PC-3 (cell line): ENCODE measurements at regions of chr5 and their contacts with region 1.

Region 1: GRCh38 chr5:141094481-141095262 is at the start of gene PCDHB2:
- DNase-seq: peak; percentile 81
- ATAC-seq: peak; percentile 97
- H3K4me3 ChIP-seq: peak within 1 kb of the TSS; percentile 72
- H3K27ac ChIP-seq: no peak within 1 kb of the TSS
- H3K4me1 ChIP-seq: no peaks in the 10 kb centered on the region
- H3K27me3 ChIP-seq: no peaks in the 10 kb centered on the region
- CTCF ChIP-seq: peak; percentile 73
- total RNA-seq, gene PCDHB2: 13.8 and 15.0 TPM in 2 replicates

Region 2: GRCh38 chr5:140725799-140726471 is 368.7 kb before region 1 on chr5:
- CTCF ChIA-PET with region 1: no interaction called
- POLR2A ChIA-PET with region 1: no interaction called
- intact Hi-C with region 1: no loop called
- DNase-seq: no peak
- ATAC-seq: no peak
- H3K4me3 ChIP-seq: no peak overlapping the region
- H3K27ac ChIP-seq: no peak overlapping the region
- H3K4me1 ChIP-seq: no peaks in the 10 kb centered on the region
- H3K27me3 ChIP-seq: no peaks in the 10 kb centered on the region
- CTCF ChIP-seq: no peak

Region 3: DNA sequence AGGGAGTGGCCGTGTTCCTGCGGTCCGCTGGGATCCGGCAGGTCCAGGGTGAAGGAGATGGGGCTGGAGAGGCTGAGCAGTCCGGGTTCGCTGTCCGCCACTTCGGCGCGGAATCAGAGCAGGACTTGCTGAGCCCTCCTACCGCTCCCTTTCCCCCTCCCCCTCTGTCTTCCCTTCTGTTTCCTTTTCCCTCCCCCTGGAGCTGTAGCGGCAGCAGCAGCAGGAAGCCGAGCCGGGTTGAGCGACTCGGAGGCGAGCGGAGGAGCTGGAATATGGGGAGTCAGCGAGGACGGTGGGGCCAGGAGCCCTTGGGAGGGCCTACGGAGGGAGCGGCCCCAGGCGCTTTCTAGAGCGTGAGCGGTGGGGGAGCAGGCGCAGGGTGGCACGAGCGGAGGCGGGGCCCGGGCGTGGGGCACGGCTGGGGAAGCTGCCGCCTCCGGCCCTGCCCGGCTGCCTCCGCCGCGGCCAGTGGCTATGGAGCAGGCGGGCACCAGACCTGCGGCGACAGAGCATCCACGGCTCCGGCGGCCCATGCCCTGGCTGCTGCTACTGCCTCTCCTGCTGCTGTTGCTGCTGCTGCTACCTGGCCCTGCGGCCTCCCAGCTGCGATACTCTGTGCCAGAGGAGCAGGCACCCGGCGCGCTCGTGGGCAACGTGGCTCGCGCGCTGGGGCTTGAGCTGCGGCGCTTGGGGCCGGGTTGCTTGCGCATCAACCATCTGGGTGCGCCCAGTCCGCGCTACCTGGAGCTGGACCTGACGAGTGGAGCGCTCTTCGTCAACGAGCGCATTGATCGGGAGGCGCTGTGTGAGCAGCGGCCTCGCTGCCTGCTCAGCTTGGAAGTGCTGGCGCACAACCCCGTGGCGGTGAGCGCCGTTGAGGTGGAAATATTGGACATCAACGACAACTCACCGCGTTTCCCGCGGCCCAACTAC is 128.1 kb before region 1 on chr5 and contains the start of gene PCDHAC2:
- CTCF ChIA-PET with region 1: no interaction called
- POLR2A ChIA-PET with region 1: no interaction called
- intact Hi-C with region 1: no loop called
- DNase-seq: peak; percentile 60
- ATAC-seq: peak; percentile 79
- H3K4me3 ChIP-seq: peak within 1 kb of the TSS; percentile 90
- H3K27ac ChIP-seq: no peak within 1 kb of the TSS
- H3K4me1 ChIP-seq: peaks cover 21% of the 10 kb centered on the region
- H3K27me3 ChIP-seq: no peaks in the 10 kb centered on the region
- CTCF ChIP-seq: no peak
- total RNA-seq, gene PCDHAC2: 4.2 and 8.2 TPM in 2 replicates

Region 4: DNA sequence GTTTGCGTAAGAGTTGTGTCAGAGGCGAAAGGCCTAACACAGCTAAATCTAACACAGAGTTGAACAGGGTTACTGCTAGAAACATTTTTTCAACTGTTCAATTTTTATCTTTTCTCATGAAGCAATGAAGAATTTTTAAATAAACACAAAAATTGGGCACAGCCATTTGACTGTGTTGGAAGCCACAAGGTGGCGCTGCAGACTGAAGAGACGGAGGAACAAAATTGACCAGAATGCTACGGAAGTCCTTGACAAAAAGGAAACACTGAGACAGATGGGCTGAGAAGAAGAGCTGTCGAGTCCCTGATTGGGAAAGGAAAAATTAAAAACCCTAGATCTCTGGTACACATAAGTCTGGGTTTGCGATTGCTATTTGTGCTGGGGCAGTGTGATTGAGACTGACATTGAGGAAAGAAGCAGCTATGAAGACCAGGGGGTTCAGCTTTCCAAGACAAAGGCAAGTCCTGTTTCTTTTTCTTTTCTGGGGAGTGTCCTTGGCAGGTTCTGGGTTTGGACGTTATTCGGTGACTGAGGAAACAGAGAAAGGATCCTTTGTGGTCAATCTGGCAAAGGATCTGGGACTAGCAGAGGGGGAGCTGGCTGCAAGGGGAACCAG is 92.3 kb after region 1 on chr5 and contains the start of gene PCDHB9:
- CTCF ChIA-PET with region 1: interaction called, 3 read pairs
- POLR2A ChIA-PET with region 1: no interaction called
- intact Hi-C with region 1: loop called (anchors 5 kb)
- DNase-seq: peak; percentile 47
- ATAC-seq: peak; percentile 66
- H3K4me3 ChIP-seq: peak within 1 kb of the TSS; percentile 50
- H3K27ac ChIP-seq: no peak within 1 kb of the TSS
- H3K4me1 ChIP-seq: no peaks in the 10 kb centered on the region
- H3K27me3 ChIP-seq: no peaks in the 10 kb centered on the region
- CTCF ChIP-seq: peak; percentile 69
- total RNA-seq, gene PCDHB9: 0.23 and 0.73 TPM in 2 replicates